Activated T-helper 2 cell treated with anti-CD3 and anti-CD28 coated beads, Interferon-gamma antibody, Interleukin-2, Interleukin-4, amounts not matched to agents 10 μg/mL and 5 μg/mL and 100 μg/mL, durations not matched to agents 14 hours and 24 hours and 36 hours (primary cell): ENCODE measurements at regions of chr7 and their contacts with region 1.

Region 1: DNA sequence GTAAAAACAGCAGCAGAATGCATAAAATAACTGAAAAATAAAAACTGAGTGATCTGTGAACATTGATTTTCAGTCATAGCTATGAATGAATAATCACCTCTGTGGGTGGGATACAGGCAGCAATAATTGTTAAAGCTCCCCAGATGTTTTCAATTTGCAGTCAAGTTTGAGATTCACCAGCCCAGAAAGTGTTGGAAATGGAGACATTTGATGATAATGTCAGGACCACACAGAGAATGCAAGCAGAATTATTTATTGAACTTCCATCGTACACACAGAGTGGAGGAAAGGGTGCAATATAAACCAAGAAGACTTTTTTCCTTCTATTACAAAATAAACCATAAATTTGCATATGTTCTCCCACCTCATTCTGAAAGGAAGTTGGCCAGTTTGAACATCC is 601.7 kb downstream of the ANKRD7 start:
- DNase-seq: no peak
- H3K4me3 Mint-ChIP-seq: no peak overlapping the region
- H3K27ac Mint-ChIP-seq: no peak overlapping the region
- H3K4me1 Mint-ChIP-seq: no peaks in the 10 kb centered on the region
- H3K27me3 Mint-ChIP-seq: no peaks in the 10 kb centered on the region

Region 2: GRCh38 chr7:118836933-118837332 is 10.7 kb after region 1 on chr7:
- intact Hi-C with region 1: loop called (anchors 1 kb)
- DNase-seq: no peak
- H3K4me3 Mint-ChIP-seq: no peak overlapping the region
- H3K27ac Mint-ChIP-seq: no peak overlapping the region
- H3K4me1 Mint-ChIP-seq: no peaks in the 10 kb centered on the region
- H3K27me3 Mint-ChIP-seq: no peaks in the 10 kb centered on the region